CD8-positive, alpha-beta memory T cell (primary cell): ENCODE measurements at regions of chr4 and their contacts with region 1.

Region 1: DNA sequence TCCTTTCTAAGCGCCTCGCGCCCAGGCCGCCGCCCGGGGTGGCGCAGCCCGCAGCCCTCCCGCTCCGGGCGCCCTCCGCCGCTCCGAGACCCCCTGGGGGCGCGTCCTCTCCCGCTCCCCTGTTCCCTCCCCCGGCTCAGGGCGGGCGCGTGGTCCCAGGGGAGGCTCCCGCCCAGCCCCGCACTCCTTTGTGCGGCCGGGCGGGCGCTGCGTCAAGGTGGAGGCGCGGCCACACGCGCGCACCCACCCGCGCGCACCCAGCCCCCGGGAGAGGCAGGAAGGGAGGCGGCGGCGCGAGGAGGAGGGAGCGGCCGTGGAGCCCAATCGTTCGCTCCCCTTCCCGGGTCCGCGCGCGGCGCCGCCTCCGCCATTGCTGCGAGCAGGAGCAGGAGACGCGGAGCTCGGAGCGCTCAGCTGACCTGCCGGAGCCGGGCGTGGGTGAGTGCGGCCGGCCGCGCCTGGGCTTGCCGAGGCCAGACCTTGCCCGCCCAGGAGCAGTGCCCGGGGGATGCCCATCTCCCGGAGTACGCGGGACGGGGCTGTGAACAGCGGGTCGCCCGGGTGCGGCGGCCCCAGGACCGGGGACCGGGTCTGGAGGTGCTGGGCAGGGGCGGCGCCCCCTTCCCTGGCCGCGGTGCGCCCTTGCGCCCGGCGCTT is at the start of gene NSG1:
- DNase-seq: peak; percentile 29 to 70 (median 41)
- H3K4me3 ChIP-seq: peak within 1 kb of the TSS; percentile 41
- H3K4me3 Mint-ChIP-seq: peak within 1 kb of the TSS; percentile 89 to 99 (median 93)
- H3K27ac ChIP-seq: peak within 1 kb of the TSS; percentile 24
- H3K27ac Mint-ChIP-seq: peak within 1 kb of the TSS in 6 of 8 donors; percentile 65 to 87 (median 78)
- H3K4me1 ChIP-seq: peaks cover 12% of the 10 kb centered on the region
- H3K4me1 Mint-ChIP-seq: peaks cover 14 to 32% (median 27%) of the 10 kb centered on the region in 3 donors
- H3K27me3 ChIP-seq: no peaks in the 10 kb centered on the region
- H3K27me3 Mint-ChIP-seq: peaks cover 5 to 13% of the 10 kb centered on the region in 2 donors
- total RNA-seq, gene NSG1: 15.1 to 16.3 TPM

Region 2: GRCh38 chr4:4344915-4345527 is 41.8 kb before region 1 on chr4:
- CTCF ChIA-PET with region 1: interaction called, 4 read pairs
- POLR2A ChIA-PET with region 1: interaction called, 10 read pairs
- DNase-seq: no peak
- H3K4me3 ChIP-seq: no peak overlapping the region
- H3K4me3 Mint-ChIP-seq: no peak overlapping the region
- H3K27ac ChIP-seq: no peak overlapping the region
- H3K27ac Mint-ChIP-seq: peak overlapping the region in 1 of 8 donors; percentile 37
- H3K4me1 ChIP-seq: peaks cover 22% of the 10 kb centered on the region
- H3K4me1 Mint-ChIP-seq: peaks cover 23 to 52% (median 38%) of the 10 kb centered on the region in 3 donors
- H3K27me3 ChIP-seq: no peaks in the 10 kb centered on the region
- H3K27me3 Mint-ChIP-seq: peaks cover 0 to 7% of the 10 kb centered on the region in 2 donors

Region 3: DNA sequence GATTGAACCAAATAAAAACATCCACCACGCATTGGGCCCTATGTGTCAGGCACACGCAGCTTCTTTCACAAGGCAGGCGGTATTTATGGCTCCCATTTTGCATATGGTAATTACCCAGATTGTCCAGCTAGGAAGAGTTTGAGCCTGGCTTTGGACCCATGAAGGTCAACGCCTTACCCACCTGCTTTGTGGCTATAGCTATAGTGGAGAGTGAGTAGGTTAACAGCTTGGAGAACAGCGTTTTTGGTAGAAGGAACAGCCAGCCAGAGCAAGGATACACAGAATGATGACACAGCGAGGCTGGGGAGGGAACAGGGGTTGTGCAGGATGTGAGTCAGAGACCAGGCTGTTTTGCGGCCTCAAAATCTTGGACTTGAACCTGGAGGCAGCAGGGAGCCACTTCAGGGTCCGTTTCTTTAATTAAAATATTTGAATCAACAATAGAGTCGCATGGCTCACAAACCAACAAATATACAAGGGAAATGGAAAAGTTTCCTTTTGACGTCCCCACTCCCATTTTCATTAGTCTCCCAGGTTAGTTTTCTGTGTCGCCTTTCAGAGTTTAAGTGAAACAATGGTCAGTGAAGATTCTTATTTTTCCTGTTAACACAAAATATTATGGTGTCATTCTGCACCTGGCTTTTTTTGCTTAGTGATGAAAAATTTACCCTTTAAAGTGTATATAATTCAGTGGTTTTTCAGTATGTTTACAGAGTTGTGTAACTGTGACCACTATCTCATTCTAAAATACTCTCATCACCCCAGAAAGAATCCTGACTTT is 273.2 kb after region 1 on chr4:
- CTCF ChIA-PET with region 1: no interaction called
- POLR2A ChIA-PET with region 1: interaction called, 10 read pairs
- DNase-seq: no peak
- H3K4me3 ChIP-seq: no peak overlapping the region
- H3K4me3 Mint-ChIP-seq: no peak overlapping the region
- H3K27ac ChIP-seq: no peak overlapping the region
- H3K27ac Mint-ChIP-seq: peak overlapping the region in 1 of 8 donors; percentile 45
- H3K4me1 ChIP-seq: no peaks in the 10 kb centered on the region
- H3K4me1 Mint-ChIP-seq: no peaks in the 10 kb centered on the region
- H3K27me3 ChIP-seq: no peaks in the 10 kb centered on the region
- H3K27me3 Mint-ChIP-seq: no peaks in the 10 kb centered on the region